ENCODE measurements at regions of chr16 and their contacts with region 1.

Region 1: GRCh38 chr16:19886073-19886941 is 1.7 kb upstream of the GPRC5B start:
- DNase-seq: peak; percentile 69 to 81 (median 73)
- ATAC-seq: peak; percentile 28 to 52 (median 42)
- H3K4me3 ChIP-seq: peak overlapping the region in 11 of 12 donors; percentile 73 to 100 (median 93)
- H3K27ac ChIP-seq: no peak overlapping the region
- H3K4me1 ChIP-seq: peaks cover 0 to 35% (median 18%) of the 10 kb centered on the region in 12 donors
- H3K27me3 ChIP-seq: peaks cover 0 to 24% (median 0%) of the 10 kb centered on the region in 9 donors
- CTCF ChIP-seq: peak in 11 of 12 donors; percentile 99 to 100 (median 100)
- POLR2A ChIP-seq: no peak

Region 2: GRCh38 chr16:19555162-19555937 is 331.0 kb before region 1 on chr16 and contains the start of gene VPS35L:
- intact Hi-C with region 1: loop called (anchors 1 to 5 kb)
- DNase-seq: peak; percentile 98 to 99 (median 98)
- ATAC-seq: peak; percentile 99 to 100 (median 100)
- H3K4me3 ChIP-seq: peak within 1 kb of the TSS; percentile 58 to 95 (median 72)
- H3K27ac ChIP-seq: peak within 1 kb of the TSS; percentile 52 to 91 (median 86)
- H3K4me1 ChIP-seq: peaks cover 0 to 15% (median 8%) of the 10 kb centered on the region in 12 donors
- H3K27me3 ChIP-seq: no peaks in the 10 kb centered on the region
- CTCF ChIP-seq: peak; percentile 57 to 86 (median 78)
- POLR2A ChIP-seq: peak in 1 of 2 donors; percentile 66
- total RNA-seq, gene VPS35L: 20.6 to 47.3 (median 27.0) TPM

Region 3: GRCh38 chr16:19583665-19584300 is 302.5 kb before region 1 on chr16:
- intact Hi-C with region 1: loop called in 3 of 10 experiments (anchors 5 kb)
- DNase-seq: no peak
- ATAC-seq: peak in 3 of 4 donors; percentile 46 to 62 (median 58)
- H3K4me3 ChIP-seq: no peak overlapping the region
- H3K27ac ChIP-seq: no peak overlapping the region
- H3K4me1 ChIP-seq: peaks cover 0 to 11% (median 4%) of the 10 kb centered on the region in 12 donors
- H3K27me3 ChIP-seq: no peaks in the 10 kb centered on the region
- CTCF ChIP-seq: peak; percentile 70 to 89 (median 77)
- POLR2A ChIP-seq: no peak

Region 4: GRCh38 chr16:19645557-19645981 is 240.7 kb before region 1 on chr16:
- intact Hi-C with region 1: loop called in 1 of 10 experiments (anchors 5 kb)
- DNase-seq: peak; percentile 62 to 81 (median 74)
- ATAC-seq: peak; percentile 70 to 87 (median 74)
- H3K4me3 ChIP-seq: peak overlapping the region in 10 of 12 donors; percentile 6 to 40 (median 28)
- H3K27ac ChIP-seq: peak overlapping the region; percentile 32 to 89 (median 82)
- H3K4me1 ChIP-seq: peaks cover 0 to 32% (median 14%) of the 10 kb centered on the region in 12 donors
- H3K27me3 ChIP-seq: no peaks in the 10 kb centered on the region
- CTCF ChIP-seq: no peak
- POLR2A ChIP-seq: no peak

Region 5: GRCh38 chr16:19696328-19696727 is 190.0 kb before region 1 on chr16:
- intact Hi-C with region 1: loop called in 2 of 10 experiments (anchors 5 to 10 kb)
- DNase-seq: peak; percentile 82 to 88 (median 86)
- ATAC-seq: peak; percentile 46 to 77 (median 61)
- H3K4me3 ChIP-seq: no peak overlapping the region
- H3K27ac ChIP-seq: peak overlapping the region; percentile 44 to 92 (median 82)
- H3K4me1 ChIP-seq: peaks cover 18 to 61% (median 45%) of the 10 kb centered on the region in 12 donors
- H3K27me3 ChIP-seq: no peaks in the 10 kb centered on the region
- CTCF ChIP-seq: no peak
- POLR2A ChIP-seq: no peak

Region 6: DNA sequence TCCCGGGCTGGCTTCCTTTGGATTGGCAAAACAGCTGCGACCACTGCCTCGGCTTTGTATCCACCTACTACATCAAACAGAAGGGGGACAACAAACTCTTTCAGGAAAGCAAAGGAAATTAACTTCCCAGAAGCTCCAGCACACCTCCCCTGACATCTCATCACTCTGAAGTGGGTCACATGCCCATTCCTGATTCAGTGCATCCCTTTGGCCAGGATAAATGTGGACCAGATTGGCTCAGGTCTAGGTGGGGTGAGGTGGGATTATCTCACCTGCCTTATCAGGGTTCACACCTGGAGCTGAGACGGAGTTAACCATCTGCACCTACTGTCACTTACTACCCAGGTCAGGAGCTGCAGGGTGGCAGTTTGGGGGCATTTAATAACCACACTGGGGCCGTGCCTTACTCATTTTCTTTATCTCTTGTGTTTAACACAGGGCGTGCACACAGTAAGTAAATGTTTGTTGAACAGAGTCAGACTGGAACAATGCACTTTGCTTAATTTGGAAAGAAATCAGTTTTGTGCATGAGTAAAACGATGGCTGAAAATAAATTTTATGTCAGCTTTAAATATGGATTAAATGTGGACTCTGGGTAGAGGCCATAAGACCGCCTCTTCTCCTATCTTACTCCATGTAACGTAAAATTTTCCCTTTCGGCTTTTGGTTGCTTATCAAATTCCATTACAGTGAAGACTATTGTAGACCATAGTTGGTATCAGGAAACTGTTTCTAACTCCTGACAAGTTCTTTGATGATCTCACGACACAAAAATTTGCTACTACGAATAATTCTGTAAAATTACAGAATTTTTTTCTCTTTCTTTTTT is 132.3 kb before region 1 on chr16:
- intact Hi-C with region 1: loop called in 1 of 10 experiments (anchors 10 kb)
- DNase-seq: no peak
- ATAC-seq: peak in 3 of 4 donors; percentile 52 to 75 (median 63)
- H3K4me3 ChIP-seq: no peak overlapping the region
- H3K27ac ChIP-seq: peak overlapping the region in 11 of 12 donors; percentile 37 to 87 (median 71)
- H3K4me1 ChIP-seq: peaks cover 0 to 74% (median 40%) of the 10 kb centered on the region in 12 donors
- H3K27me3 ChIP-seq: no peaks in the 10 kb centered on the region
- CTCF ChIP-seq: no peak
- POLR2A ChIP-seq: no peak

Region 7: DNA sequence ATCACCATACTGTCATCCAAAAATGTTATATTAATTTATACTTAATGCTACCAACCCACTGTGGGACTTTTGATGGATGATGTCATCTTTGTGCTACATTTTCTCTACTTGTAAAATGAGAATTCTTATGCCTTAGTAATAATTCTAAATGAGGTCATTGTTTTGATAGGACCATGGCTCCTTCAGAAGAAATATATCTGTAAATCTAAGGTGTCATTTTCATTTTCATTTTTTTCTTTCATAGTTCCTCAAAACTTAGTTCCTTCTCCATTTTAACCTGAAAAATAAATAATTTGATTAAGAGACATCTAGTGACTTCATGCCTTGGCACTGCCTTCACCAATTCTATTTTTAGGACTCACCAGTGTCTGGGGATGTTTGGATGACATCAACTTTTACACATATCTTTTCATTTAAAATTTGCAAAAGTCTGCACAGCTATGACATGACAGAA is 50.3 kb before region 1 on chr16:
- intact Hi-C with region 1: loop called in 2 of 10 experiments (anchors 5 kb)
- DNase-seq: no peak
- ATAC-seq: no peak
- H3K4me3 ChIP-seq: no peak overlapping the region
- H3K27ac ChIP-seq: peak overlapping the region in 4 of 12 donors; percentile 23 to 52 (median 25)
- H3K4me1 ChIP-seq: peaks cover 0 to 31% (median 12%) of the 10 kb centered on the region in 12 donors
- H3K27me3 ChIP-seq: no peaks in the 10 kb centered on the region
- CTCF ChIP-seq: no peak
- POLR2A ChIP-seq: no peak

Measured in heart left ventricle (tissue), 16 donors.